ENCODE measurements at regions of chr13 and their contacts with region 1.

Region 1: DNA sequence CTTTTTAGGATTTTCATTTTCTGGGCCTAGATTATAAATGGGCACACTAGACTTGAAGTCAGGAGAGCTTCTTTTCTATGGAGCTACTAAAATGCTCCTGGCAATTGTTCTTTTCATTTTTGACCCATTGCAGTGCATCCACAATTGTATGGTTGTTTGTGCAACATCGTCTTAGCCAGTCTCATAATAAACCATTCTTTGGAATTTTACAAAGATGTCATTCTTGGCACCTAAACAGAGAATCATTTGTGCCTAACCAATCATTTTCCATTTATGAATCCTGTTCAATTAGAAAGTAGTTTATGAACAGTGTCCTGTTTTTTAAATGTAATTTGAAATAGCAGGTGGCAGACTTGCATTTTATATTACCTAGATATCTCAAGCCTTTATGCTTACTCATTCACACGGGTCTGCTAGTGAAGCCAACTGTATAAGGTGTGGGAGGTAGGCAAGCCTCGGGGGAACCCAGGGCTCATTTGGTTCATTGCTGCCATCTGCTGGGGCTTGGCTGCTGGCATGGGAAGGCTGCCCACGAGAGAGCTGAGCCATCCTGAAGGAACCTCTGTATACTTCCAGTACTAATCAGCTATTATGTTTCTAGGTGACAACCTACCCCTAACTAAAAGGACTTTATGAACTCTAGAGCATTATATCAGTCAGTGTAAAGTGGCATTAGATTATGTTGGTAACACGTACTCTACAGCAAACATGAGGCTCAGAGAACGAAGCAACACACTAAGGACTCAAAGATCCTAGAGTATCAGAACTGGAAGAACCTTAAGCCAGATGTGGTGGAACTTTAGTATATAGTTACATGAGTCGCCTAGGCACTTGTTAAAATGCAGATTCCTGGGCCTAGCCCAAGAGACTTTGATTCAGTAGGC is 60.0 kb downstream of the TPT1 start:
- DNase-seq: peak; percentile 67 to 79
- ATAC-seq: peak; percentile 99 to 100
- H3K4me3 ChIP-seq: no peak overlapping the region
- H3K27ac ChIP-seq: no peak overlapping the region
- H3K4me1 ChIP-seq: peaks cover 6% of the 10 kb centered on the region; the same call in 2 of the 3 replicates
- CTCF ChIP-seq: peak; percentile 79
- EP300 ChIP-seq: no peak
- POLR2A ChIP-seq: no peak
- RAD21 ChIP-seq: peak; percentile 91 to 92

Region 2: DNA sequence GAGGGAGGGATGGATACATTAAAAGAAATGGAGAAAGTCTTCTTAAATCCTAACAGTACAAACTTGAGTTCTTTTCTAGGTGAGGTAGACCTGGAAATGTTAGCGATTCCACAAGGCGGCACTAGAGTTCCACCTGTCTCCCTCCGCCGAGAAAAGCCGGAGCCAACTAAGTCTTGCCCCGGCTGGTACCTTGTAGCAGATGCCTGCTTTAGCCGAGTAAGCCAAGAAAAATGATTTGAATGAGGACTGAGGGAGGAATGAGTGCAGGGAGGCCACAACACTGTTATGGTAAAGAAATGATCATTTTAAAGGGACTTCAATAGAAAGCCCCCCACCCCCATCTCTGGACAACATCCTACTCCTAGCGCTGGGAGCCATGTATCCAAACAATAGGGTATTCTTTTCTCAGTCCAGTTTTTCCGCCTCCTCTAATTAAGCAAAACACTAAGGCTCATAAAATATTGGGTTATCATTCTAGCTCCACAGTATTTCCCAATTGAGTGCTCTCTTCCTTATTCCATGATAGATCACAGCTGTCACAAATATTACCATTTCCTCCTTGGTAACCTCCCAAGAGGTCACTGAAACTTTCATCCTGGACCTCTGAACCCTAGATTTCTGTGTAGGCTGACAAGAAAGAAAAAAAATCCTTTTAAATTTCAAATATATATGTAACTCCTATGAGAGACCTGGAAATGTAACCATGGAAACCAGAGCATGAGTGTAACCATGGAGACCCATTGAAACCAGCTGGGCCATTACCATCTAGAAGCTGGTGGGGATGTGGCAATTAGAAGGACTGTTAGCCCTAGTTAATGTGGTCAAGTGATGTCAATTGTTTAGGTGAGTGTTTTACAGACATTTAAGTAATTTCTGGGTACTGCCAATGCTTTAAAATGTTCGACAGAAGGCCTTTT is 233.3 kb before region 1 on chr13:
- CTCF ChIA-PET with region 1: interaction called, 98 read pairs
- POLR2A ChIA-PET with region 1: interaction called, 3 read pairs
- DNase-seq: peak; percentile 68 to 71
- ATAC-seq: peak; percentile 97 to 98
- H3K4me3 ChIP-seq: peak overlapping the region; percentile 40
- H3K27ac ChIP-seq: peak overlapping the region in 1 of 2 experiments; percentile 58; a peak in 2 of 6 replicates
- H3K4me1 ChIP-seq: no peaks in the 10 kb centered on the region
- CTCF ChIP-seq: peak; percentile 86
- EP300 ChIP-seq: no peak
- POLR2A ChIP-seq: no peak
- RAD21 ChIP-seq: peak; percentile 96

Region 3: GRCh38 chr13:45194081-45194939 is 86.7 kb before region 1 on chr13:
- CTCF ChIA-PET with region 1: interaction called, 20 read pairs
- POLR2A ChIA-PET with region 1: interaction called, 3 read pairs
- DNase-seq: peak in 1 of 2 experiments; percentile 33
- ATAC-seq: peak in 1 of 2 experiments; percentile 72; a peak in 3 of 6 replicates
- H3K4me3 ChIP-seq: no peak overlapping the region
- H3K27ac ChIP-seq: no peak overlapping the region
- H3K4me1 ChIP-seq: peaks cover 40% of the 10 kb centered on the region
- CTCF ChIP-seq: peak; percentile 29; the same call in 1 of the 3 replicates
- EP300 ChIP-seq: no peak
- POLR2A ChIP-seq: no peak
- RAD21 ChIP-seq: peak; percentile 50 to 66

Region 4: DNA sequence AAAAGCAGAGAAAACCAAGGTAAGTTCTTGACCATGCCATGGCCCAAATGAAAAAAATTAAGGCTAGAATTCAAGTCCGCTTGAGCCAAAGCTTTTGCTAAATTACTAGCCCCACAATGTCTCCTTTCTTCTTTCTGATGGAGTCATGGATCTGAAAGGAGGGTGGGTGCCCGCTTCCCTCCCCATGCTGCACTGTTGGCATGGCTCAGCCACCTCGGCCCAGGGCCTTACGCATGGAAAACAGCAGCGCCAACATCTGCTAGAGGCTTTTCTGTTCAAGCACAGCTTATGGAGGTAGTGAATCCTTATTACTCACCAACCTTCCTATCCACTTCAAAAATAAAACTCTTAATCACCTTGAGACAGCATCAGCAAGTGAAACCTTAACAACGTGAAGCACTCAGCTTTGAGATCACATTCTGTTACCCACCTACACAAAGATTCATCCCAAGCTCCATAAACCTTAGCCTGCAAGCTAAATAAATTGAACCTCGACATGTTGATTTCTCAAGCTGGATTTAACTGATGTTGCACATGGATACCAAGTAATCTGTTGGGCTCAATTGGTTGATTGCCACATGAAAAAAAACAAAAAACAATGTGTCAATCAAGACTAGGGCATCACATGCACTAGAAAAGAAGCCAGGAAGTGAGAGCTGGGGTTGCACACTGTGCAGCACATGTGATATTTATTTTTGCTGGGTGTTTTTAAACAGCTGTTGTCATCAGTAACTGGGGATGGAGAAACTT is 16.6 kb after region 1 on chr13:
- CTCF ChIA-PET with region 1: interaction called, 29 read pairs
- POLR2A ChIA-PET with region 1: no interaction called
- DNase-seq: no peak
- ATAC-seq: no peak
- H3K4me3 ChIP-seq: no peak overlapping the region
- H3K27ac ChIP-seq: no peak overlapping the region
- H3K4me1 ChIP-seq: no peaks in the 10 kb centered on the region
- CTCF ChIP-seq: no peak
- EP300 ChIP-seq: no peak
- POLR2A ChIP-seq: no peak
- RAD21 ChIP-seq: no peak